MCF 10A (cell line): ENCODE measurements at regions of chr1 and their contacts with region 1.

Region 1: DNA sequence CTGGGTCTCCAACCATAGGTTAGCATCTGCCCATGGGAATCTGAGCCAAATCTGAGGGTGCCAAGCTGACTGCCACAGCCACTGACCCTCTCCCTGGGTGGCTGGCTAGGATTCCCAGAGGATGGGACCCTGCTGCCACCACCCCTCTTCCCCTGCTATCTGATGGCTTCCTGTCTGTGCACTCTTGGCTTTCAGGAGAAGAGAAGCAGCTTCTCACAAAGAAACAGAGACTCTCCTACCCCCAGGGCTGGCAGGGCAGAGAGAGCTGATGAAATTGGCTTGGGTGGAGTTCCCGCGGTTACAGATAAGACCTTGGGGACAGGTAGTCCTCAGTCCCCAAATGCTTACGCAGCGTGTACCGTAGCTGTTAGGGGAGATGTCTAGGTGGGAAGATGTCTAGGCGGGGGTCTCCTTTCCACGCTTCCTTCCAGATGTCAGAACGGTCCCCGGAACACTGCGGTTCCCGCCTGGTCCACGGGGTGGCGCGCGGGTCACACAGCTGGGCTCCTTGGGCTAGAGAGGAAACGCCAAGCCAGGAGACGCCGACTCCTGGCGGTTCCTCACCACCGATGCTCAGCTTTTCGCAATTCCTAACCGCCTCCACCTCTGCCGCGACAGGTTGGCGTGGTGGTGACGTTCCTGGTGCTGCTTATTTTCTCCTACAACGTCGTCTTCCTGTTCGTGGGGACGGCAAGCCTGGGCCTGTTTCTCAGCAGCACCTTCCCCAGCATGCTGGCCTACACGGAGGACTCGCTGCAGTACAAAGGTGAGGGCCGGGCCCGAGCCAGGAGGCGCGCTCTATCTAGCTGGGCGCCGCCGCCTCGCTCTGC is 40.1 kb downstream of the ELK4 start:
- DNase-seq: peak; percentile 99
- H3K4me3 Mint-ChIP-seq: peak overlapping the region; percentile 64
- H3K27ac Mint-ChIP-seq: peak overlapping the region; percentile 39
- H3K4me1 Mint-ChIP-seq: peaks cover 18% of the 10 kb centered on the region
- H3K27me3 Mint-ChIP-seq: no peaks in the 10 kb centered on the region
- CTCF ChIP-seq: peak; percentile 100

Region 2: GRCh38 chr1:205536759-205537361 is 54.9 kb before region 1 on chr1:
- CTCF ChIA-PET with region 1: interaction called, 12 read pairs
- POLR2A ChIA-PET with region 1: interaction called, 3 read pairs
- intact Hi-C with region 1: no loop called
- DNase-seq: peak; percentile 55
- H3K4me3 Mint-ChIP-seq: no peak overlapping the region
- H3K27ac Mint-ChIP-seq: no peak overlapping the region
- H3K4me1 Mint-ChIP-seq: peaks cover 11% of the 10 kb centered on the region
- H3K27me3 Mint-ChIP-seq: no peaks in the 10 kb centered on the region
- CTCF ChIP-seq: no peak

Region 3: GRCh38 chr1:205610036-205610435 is 18.3 kb after region 1 on chr1:
- CTCF ChIA-PET with region 1: interaction called, 26 read pairs
- POLR2A ChIA-PET with region 1: interaction called, 25 read pairs
- intact Hi-C with region 1: no loop called
- DNase-seq: no peak
- H3K4me3 Mint-ChIP-seq: no peak overlapping the region
- H3K27ac Mint-ChIP-seq: peak overlapping the region; percentile 65
- H3K4me1 Mint-ChIP-seq: peaks cover 23% of the 10 kb centered on the region
- H3K27me3 Mint-ChIP-seq: no peaks in the 10 kb centered on the region
- CTCF ChIP-seq: no peak

Region 4: GRCh38 chr1:205631727-205632373 is 40.1 kb after region 1 on chr1 and contains the start of gene ELK4:
- CTCF ChIA-PET with region 1: interaction called, 185 read pairs
- POLR2A ChIA-PET with region 1: interaction called, 555 read pairs
- intact Hi-C with region 1: loop called (anchors 1 kb)
- DNase-seq: peak; percentile 100
- H3K4me3 Mint-ChIP-seq: peak within 1 kb of the TSS; percentile 90
- H3K27ac Mint-ChIP-seq: peak within 1 kb of the TSS; percentile 91
- H3K4me1 Mint-ChIP-seq: peaks cover 35% of the 10 kb centered on the region
- H3K27me3 Mint-ChIP-seq: no peaks in the 10 kb centered on the region
- CTCF ChIP-seq: peak; percentile 87
- total RNA-seq, gene ELK4: 101 and 109 TPM in 2 replicates

Region 5: DNA sequence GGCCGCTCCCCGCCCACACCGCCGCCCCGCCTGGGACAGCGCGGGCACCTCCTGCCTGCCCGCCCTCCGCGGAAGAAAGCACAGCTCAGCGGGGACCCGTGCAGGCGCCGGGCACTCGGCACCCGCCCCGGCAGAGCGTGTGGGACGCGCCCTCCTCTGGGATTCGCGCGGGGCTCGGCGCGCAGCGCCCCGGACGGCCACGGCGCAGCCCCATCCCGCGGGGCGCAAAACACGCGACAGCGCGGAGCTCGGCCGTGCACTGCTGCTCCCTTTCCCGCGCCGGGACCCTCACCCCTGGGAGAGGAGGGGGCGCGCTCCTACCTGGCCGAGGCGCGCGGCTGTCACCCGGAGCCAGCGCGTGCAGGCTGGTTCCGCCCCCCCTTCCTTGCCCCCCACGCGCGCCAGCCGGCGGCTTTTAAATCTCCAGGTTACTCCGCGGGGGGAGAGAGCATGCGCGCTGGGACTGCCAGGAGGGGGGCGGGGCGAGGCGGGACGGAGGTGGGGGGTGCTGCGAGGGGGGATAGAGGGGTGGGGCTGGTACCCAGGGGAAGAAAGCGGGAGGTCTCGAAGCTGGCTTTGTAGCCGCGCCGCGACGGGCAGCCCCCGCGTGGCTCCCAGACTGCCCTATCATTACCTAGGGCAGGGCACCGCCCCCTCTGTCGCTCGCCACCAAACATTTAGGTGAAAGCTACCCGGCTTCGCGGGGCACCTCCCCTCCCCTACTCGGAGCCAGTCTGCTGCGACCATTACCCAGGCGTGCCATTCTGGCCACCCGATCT is 88.5 kb after region 1 on chr1 and contains the start of gene SLC45A3:
- CTCF ChIA-PET with region 1: interaction called, 19 read pairs
- POLR2A ChIA-PET with region 1: interaction called, 3 read pairs
- intact Hi-C with region 1: no loop called
- DNase-seq: no peak
- H3K4me3 Mint-ChIP-seq: peak within 1 kb of the TSS; percentile 76
- H3K27ac Mint-ChIP-seq: peak within 1 kb of the TSS; percentile 5
- H3K4me1 Mint-ChIP-seq: peaks cover 14% of the 10 kb centered on the region
- H3K27me3 Mint-ChIP-seq: no peaks in the 10 kb centered on the region
- CTCF ChIP-seq: no peak
- total RNA-seq, gene SLC45A3: 3.1 and 5.3 TPM in 2 replicates

Region 6: GRCh38 chr1:205907794-205908193 is 316.1 kb after region 1 on chr1:
- CTCF ChIA-PET with region 1: interaction called, 3 read pairs
- POLR2A ChIA-PET with region 1: no interaction called
- intact Hi-C with region 1: loop called (anchors 5 kb)
- DNase-seq: peak; percentile 86
- H3K4me3 Mint-ChIP-seq: no peak overlapping the region
- H3K27ac Mint-ChIP-seq: peak overlapping the region; percentile 11
- H3K4me1 Mint-ChIP-seq: peaks cover 13% of the 10 kb centered on the region
- H3K27me3 Mint-ChIP-seq: peaks cover 28% of the 10 kb centered on the region
- CTCF ChIP-seq: peak; percentile 93